Right ventricle myocardium superior (tissue), 1 donor: ENCODE measurements at regions of chr3 and their contacts with region 1.

Region 1: GRCh38 chr3:68876112-68876713 is 56.1 kb downstream of the TAFA4 start:
- DNase-seq: no peak
- ATAC-seq: peak; percentile 68

Region 2: GRCh38 chr3:66957367-66957766 is 1918.8 kb before region 1 on chr3:
- intact Hi-C with region 1: loop called (anchors 10 kb)
- DNase-seq: no peak
- ATAC-seq: no peak

Region 3: DNA sequence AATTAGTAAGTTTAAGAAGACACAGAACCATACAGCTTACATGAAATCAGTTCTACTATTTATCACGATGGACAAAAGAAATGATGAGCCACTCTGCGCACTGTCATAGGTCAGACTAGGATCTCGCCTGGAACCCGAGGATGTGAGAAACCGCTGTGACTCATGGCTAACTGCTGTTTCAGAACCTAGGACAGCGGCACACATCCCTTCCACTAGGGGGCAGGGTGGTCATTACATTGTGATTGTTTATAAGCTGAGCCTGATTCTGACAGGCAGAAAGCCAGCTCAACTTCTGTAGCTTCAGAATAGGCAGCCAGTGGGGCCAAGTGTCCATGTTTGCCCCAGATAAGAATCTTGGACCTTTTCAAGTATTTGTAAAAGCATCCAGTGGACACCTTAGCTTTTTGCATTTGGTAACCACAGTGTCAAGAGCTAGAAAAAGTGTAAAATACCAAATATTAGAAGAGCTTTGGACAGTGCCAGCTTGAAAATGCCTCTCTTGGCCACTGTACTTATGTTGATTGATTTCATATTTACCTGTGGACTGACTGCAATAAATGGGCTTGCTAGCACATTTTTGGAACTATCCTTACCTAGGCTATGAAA is 1762.3 kb before region 1 on chr3:
- intact Hi-C with region 1: loop called (anchors 10 kb)
- DNase-seq: peak; percentile 70
- ATAC-seq: peak; percentile 77

Region 4: GRCh38 chr3:67384760-67385397 is 1491.3 kb before region 1 on chr3:
- intact Hi-C with region 1: loop called (anchors 10 kb)
- DNase-seq: no peak
- ATAC-seq: peak; percentile 80

Region 5: DNA sequence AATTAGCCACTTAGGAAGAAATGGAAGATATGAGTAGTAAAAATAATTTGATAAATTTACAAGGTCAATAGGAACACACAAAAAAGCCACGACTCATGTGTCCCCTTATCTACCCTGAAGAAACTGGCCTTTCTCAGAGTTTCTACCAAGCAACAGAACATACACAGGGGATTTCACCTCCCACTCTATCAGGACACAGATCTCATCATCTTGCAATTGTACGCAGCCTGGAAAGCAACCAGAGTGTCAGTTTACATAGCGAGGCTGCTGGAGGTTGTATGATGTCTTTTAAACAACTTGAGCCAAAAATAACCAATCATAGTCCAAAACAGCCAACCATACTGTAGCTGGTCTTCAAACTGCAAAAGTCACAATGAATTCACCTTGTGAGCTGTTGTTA is 265.9 kb after region 1 on chr3:
- intact Hi-C with region 1: no loop called
- DNase-seq: no peak
- ATAC-seq: no peak